Transverse colon (tissue), 4 donors: ENCODE measurements at regions of chr4 and their contacts with region 1.

Region 1: DNA sequence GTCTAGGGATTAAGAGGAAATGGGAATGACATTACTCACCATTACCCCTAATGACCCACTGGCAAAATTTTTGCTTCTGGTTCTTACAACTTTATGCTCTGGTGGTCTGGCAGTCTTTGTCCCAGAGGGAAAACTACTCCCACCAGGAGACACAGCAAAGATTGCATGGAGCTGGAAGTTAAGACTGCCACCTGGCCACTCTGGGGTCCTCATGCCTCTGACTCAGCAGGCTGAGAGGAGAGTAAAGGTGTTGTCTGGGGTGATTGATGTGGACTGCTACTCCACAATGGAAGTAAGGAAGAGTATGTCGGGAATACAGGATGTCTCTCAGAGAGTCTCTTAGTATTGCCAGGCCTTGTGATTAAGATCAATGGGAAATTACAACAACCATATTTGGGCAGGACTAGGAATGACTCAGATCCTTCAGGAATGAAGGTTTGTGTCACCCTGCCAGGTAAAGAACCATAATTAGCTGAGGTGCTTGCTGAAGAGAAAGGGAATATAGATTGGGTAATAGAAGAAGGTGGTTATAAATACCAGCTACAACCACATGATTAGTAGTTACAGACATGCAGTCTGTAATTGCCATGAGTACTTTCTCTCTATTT is 215.5 kb downstream of the GPAT3 start:
- DNase-seq: no peak
- H3K4me3 ChIP-seq: no peak overlapping the region
- H3K27ac ChIP-seq: no peak overlapping the region
- H3K4me1 ChIP-seq: no peaks in the 10 kb centered on the region
- H3K27me3 ChIP-seq: no peaks in the 10 kb centered on the region
- CTCF ChIP-seq: no peak
- EP300 ChIP-seq: no peak
- POLR2A ChIP-seq: no peak

Region 2: GRCh38 chr4:83732114-83732635 is 19.3 kb before region 1 on chr4:
- in situ Hi-C with region 1: no loop called
- intact Hi-C with region 1: loop called (anchors 1 kb)
- DNase-seq: no peak
- H3K4me3 ChIP-seq: no peak overlapping the region
- H3K27ac ChIP-seq: no peak overlapping the region
- H3K4me1 ChIP-seq: no peaks in the 10 kb centered on the region
- H3K27me3 ChIP-seq: no peaks in the 10 kb centered on the region
- CTCF ChIP-seq: no peak
- EP300 ChIP-seq: no peak
- POLR2A ChIP-seq: no peak